ENCODE measurements at regions of chr10 and their contacts with region 1.

Region 1: DNA sequence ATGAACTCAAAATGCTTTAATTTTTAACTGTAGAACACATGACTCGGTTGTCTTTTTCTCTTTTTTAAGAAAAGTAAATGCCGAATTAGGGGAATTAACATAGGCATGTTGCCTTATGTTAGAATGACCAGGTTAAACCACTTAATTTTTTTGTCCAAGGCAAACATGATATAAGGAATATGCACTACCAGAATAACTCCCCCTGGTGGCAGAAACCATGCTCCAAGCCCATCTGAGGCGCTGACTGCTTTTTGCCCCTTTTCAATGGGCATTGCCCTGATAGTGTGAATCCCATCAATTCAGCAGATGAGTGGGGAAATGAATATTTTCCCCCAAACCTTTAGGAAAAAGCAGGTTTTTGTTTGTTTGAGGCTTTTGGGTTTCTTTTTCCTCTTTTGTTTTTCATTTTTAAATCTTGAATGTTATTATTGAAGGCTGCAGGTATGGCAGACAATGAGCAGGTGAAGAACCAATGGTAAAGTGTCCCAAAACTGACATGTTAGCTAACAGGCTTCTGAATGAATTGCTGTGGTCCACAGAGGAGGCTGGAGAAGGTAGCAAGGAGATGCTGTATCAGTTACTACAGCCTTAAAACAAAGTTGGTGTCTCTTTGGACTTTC is 284.3 kb downstream of the SORCS3 start:
- DNase-seq: no peak
- ATAC-seq: no peak
- H3K4me3 ChIP-seq: no peak overlapping the region
- H3K27ac ChIP-seq: no peak overlapping the region
- H3K4me1 ChIP-seq: no peaks in the 10 kb centered on the region
- H3K27me3 ChIP-seq: no peaks in the 10 kb centered on the region
- CTCF ChIP-seq: peak; percentile 42

Region 2: DNA sequence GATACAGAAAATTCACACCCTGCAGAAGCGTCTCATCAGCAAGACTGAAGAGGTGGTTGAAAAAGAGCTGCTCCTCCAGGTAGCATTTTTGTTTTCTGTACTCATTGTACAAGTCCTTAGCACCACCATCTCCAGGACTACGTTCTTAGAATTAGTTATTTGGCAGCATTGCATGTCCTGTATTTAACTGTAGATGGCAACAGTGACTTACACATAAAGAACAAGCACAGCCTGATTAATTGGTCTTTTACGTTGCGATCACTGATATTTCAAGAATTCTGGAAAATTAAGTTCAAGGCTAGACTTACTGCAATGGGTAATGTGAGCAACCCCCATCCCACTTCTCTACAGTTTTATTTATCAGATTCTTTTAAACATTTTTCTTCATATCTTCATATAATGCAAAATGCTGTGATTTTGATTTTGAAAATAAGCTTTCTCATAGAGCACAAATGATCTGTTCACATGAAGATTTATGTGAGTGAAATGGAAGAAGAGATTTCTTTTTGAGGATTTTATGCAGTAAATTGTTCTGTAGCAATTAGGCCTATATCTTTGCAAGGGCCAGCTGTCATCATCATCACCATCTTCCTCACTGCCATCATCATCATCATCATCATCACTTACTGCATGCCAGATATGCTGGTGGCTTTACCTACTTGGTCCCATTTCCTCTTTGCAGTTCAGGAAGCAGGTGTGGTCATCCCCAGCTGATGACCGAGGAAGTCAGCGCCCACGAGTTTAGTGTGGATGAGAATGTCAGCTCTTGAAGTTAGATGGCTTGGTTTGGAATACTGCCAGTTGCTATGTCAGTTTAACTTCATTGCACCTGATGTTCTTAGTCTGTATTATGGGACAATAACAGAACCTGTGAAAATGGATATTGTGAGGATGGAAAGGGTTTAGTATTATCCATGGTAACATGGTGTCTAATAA is 518.4 kb before region 1 on chr10:
- intact Hi-C with region 1: loop called in 1 of 2 experiments (anchors 10 kb)
- DNase-seq: no peak
- ATAC-seq: no peak
- H3K4me3 ChIP-seq: no peak overlapping the region
- H3K27ac ChIP-seq: no peak overlapping the region
- H3K4me1 ChIP-seq: no peaks in the 10 kb centered on the region
- H3K27me3 ChIP-seq: no peaks in the 10 kb centered on the region
- CTCF ChIP-seq: peak; percentile 44

Region 3: DNA sequence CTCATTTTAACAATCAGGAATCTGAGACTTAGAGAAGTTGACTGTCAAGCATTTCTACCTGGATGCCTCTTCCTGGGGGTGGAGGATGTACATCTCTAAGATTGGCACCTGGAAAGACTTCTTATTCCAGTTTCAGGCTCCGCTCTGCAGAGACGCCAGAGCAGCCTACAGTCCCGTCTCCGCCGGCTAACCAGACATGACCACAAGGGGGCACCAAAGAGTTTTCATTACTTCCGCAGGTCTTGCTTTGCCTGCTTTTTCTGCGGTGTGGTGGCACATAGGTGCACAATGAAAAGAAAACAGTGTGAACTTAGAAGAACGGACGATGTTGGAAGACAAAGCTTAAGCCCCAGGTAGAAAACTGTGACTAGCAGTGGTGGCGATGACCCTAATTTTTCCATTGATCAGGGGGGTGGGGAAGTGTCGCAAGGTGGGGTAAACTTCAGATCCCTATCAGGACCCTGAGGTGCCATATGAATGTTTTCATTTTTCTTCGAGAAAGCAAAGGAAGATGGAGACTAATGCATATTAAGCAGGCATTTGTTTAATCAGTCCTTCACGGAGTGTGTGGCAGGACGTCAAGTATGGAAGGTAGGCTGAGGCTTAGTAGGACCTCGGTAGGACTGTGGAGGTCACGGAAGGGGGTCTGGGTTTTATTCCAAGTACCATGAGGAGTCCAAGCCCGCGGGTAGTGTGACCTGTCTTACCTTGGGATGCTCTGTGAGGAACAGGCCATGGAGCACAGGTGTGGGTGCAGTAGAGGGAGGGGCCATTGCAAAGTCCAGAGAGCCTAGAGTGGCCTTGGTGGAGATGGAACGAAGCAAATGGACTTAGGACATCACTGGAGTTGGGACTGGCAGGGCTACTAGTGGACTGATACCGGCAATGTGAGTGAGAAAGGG is 344.3 kb before region 1 on chr10:
- intact Hi-C with region 1: loop called (anchors 10 kb)
- DNase-seq: peak; percentile 47 to 55
- ATAC-seq: peak; percentile 52 to 72 (median 66)
- H3K4me3 ChIP-seq: no peak overlapping the region
- H3K27ac ChIP-seq: no peak overlapping the region
- H3K4me1 ChIP-seq: no peaks in the 10 kb centered on the region
- H3K27me3 ChIP-seq: peaks cover 0 to 5% (median 2%) of the 10 kb centered on the region in 3 donors
- CTCF ChIP-seq: peak; percentile 77

Region 4: GRCh38 chr10:105063796-105064195 is 138.5 kb after region 1 on chr10:
- intact Hi-C with region 1: no loop called
- DNase-seq: no peak
- ATAC-seq: peak in 1 of 4 donors; percentile 46
- H3K4me3 ChIP-seq: no peak overlapping the region
- H3K27ac ChIP-seq: no peak overlapping the region
- H3K4me1 ChIP-seq: no peaks in the 10 kb centered on the region
- H3K27me3 ChIP-seq: no peaks in the 10 kb centered on the region
- CTCF ChIP-seq: no peak